ENCODE measurements at regions of chr7 and their contacts with region 1.

Region 1: GRCh38 chr7:77887567-77887966 is 89.0 kb downstream of the PHTF2 start:
- DNase-seq: no peak
- ATAC-seq: peak; percentile 65
- H3K4me3 ChIP-seq: no peak overlapping the region
- H3K27ac ChIP-seq: no peak overlapping the region
- H3K4me1 ChIP-seq: peaks cover 1 to 4% of the 10 kb centered on the region in 2 donors
- H3K27me3 ChIP-seq: no peaks in the 10 kb centered on the region

Region 2: DNA sequence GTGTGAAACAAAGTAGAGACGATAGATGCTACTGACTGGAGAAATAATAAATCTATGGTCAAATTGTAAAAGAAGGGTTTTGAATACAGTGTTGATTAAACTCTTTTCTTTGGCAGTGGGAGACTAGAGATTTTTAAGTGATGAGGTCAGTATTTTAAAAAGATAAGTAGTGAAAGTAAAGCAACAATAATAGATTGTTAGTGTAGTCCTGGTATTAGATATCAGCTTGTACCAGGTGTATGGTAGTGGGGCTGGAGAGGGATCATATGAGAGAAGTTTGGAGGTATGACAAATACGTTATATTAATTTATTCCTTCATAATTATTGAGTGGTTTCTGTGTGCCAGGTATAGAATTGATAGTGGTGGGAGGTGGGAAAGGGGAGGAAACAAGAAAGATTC is 63.8 kb before region 1 on chr7:
- intact Hi-C with region 1: loop called in 1 of 2 experiments (anchors 10 kb)
- DNase-seq: no peak
- ATAC-seq: no peak
- H3K4me3 ChIP-seq: no peak overlapping the region
- H3K27ac ChIP-seq: no peak overlapping the region
- H3K4me1 ChIP-seq: no peaks in the 10 kb centered on the region
- H3K27me3 ChIP-seq: no peaks in the 10 kb centered on the region